Thyroid gland (tissue), 4 donors: ENCODE measurements at regions of chr14 and their contacts with region 1.

Region 1: DNA sequence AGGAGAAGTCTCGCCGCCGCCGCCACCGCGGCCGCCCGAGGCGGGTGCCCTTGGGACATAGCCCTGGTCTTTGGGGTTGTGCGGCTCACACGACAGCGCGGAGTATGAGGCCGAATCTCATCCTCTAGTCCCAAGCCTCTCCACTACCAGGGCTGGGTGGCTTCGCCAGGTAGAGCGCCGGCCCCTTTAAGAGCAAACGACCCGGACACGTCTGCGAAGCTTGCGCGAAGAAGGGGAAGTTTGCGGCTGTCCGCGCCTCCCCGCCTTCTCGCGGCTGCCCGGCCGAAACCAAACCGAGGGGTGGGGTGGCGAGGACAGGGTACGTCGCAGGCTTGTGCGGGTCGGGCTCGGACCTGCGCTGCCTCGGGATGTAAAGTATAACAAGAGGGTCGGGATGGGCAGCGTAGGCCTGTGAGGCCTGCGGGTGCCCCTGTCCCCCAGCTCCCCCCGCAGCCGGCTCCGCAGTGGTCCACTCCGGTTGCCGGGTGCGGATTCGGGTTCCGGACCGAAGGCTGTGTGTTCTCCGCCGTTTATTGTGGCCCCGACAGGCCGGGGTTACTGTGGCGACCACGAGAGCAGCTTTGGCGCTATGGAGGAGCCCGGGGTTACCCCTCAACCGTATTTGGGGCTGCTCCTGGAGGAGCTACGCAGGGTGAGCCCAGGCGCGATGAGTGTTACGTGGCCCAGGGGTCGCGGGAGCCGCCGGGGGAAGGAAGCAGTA is 33.3 kb downstream of the MIA2 start:
- DNase-seq: peak; percentile 77 to 81
- H3K4me3 ChIP-seq: peak overlapping the region; percentile 71 to 87 (median 75)
- H3K27ac ChIP-seq: peak overlapping the region; percentile 91 to 99 (median 99)
- H3K4me1 ChIP-seq: peaks cover 10 to 19% of the 10 kb centered on the region in 2 donors
- H3K27me3 ChIP-seq: no peaks in the 10 kb centered on the region
- CTCF ChIP-seq: no peak
- POLR2A ChIP-seq: peak; percentile 31 to 77

Region 2: GRCh38 chr14:39090548-39091111 is 176.4 kb before region 1 on chr14:
- intact Hi-C with region 1: no loop called
- DNase-seq: no peak
- H3K4me3 ChIP-seq: no peak overlapping the region
- H3K27ac ChIP-seq: no peak overlapping the region
- H3K4me1 ChIP-seq: peaks cover 4 to 8% of the 10 kb centered on the region in 2 donors
- H3K27me3 ChIP-seq: no peaks in the 10 kb centered on the region
- CTCF ChIP-seq: no peak
- POLR2A ChIP-seq: no peak

Region 3: GRCh38 chr14:39102969-39103957 is 163.8 kb before region 1 on chr14 and contains the start of gene SEC23A:
- intact Hi-C with region 1: loop called (anchors 10 kb)
- DNase-seq: peak; percentile 94 to 96
- H3K4me3 ChIP-seq: peak within 1 kb of the TSS; percentile 67 to 99 (median 73)
- H3K27ac ChIP-seq: peak within 1 kb of the TSS; percentile 91 to 99 (median 95)
- H3K4me1 ChIP-seq: peaks cover 14 to 15% of the 10 kb centered on the region in 2 donors
- H3K27me3 ChIP-seq: no peaks in the 10 kb centered on the region
- CTCF ChIP-seq: no peak
- POLR2A ChIP-seq: peak; percentile 59 to 91
- total RNA-seq, gene SEC23A: 59.4 to 77.9 (median 67.4) TPM